Activated naive CD4-positive, alpha-beta T cell treated with anti-CD3 and anti-CD28 coated beads for 36 hours (primary cell): ENCODE measurements at regions of chr7 and their contacts with region 1.

Region 1: DNA sequence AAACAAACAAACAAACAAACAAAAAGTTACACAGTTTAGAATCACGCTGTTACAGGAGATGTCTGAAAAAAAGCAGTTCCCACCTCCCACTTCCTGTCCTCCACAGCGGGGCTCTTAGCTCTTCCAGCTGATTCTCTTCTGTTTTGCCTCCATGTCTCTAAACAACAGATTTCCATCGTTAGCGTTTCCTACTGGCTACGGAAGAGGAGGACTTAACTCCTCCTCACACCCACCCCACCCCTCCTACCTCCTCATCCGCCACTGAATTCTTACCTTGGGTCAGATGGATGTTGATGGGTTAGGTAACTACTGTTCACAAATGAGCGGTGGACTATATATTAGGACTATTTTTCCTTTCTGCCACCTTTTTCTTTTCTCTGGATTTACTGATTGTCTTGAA is 36.8 kb upstream of the NUB1 start:
- DNase-seq: no peak
- H3K4me3 Mint-ChIP-seq: peak overlapping the region; percentile 36
- H3K27ac Mint-ChIP-seq: no peak overlapping the region
- H3K4me1 Mint-ChIP-seq: peaks cover 5% of the 10 kb centered on the region
- H3K27me3 Mint-ChIP-seq: peaks cover 14% of the 10 kb centered on the region

Region 2: DNA sequence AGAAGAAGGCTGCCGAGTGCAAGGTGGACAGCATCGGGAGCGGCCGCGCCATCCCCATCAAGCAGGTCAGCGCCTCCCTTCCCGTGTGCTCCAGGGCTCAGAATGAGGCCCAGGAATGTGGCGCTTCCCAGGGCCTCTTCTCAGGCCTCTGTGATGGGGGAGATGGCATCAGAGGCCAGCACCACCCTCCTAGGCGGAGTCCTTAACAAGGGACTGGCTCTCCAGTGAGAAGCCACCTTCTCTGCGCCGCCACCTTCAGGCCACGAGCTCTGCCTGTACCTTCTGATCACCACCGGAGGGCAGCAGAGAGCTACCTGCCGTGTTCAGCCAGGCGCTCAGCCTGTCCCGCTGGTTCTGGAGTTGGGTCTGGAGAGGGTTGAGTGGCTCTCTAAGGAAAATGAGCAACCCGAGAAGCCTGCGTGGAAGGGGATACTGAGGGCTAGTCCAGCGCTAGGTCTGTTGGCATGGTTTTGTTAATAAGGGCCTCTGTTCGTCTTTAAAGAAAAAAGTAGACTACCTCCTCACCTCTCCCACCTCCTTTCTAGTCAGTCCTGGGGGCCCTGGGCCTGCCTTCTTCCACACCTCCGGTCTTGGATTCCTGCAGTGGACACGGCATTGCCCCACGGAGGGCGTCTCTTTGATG is 180.9 kb before region 1 on chr7:
- CTCF ChIA-PET with region 1: interaction called, 17 read pairs
- intact Hi-C with region 1: loop called (anchors 1 kb)
- DNase-seq: peak; percentile 89
- H3K4me3 Mint-ChIP-seq: no peak overlapping the region
- H3K27ac Mint-ChIP-seq: no peak overlapping the region
- H3K4me1 Mint-ChIP-seq: peaks cover 4% of the 10 kb centered on the region
- H3K27me3 Mint-ChIP-seq: no peaks in the 10 kb centered on the region

Region 3: GRCh38 chr7:151172273-151173141 is 132.3 kb before region 1 on chr7:
- CTCF ChIA-PET with region 1: interaction called, 3 read pairs
- intact Hi-C with region 1: loop called (anchors 1 kb)
- DNase-seq: peak; percentile 81
- H3K4me3 Mint-ChIP-seq: no peak overlapping the region
- H3K27ac Mint-ChIP-seq: no peak overlapping the region
- H3K4me1 Mint-ChIP-seq: peaks cover 10% of the 10 kb centered on the region
- H3K27me3 Mint-ChIP-seq: peaks cover 51% of the 10 kb centered on the region

Region 4: GRCh38 chr7:151210087-151210854 is 94.6 kb before region 1 on chr7 and contains the start of gene H2BK1:
- CTCF ChIA-PET with region 1: no interaction called
- intact Hi-C with region 1: no loop called
- DNase-seq: no peak
- H3K4me3 Mint-ChIP-seq: no peak within 1 kb of the TSS
- H3K27ac Mint-ChIP-seq: no peak within 1 kb of the TSS
- H3K4me1 Mint-ChIP-seq: peaks cover 17% of the 10 kb centered on the region
- H3K27me3 Mint-ChIP-seq: no peaks in the 10 kb centered on the region
- total RNA-seq, gene H2BK1: not detected

Region 5: DNA sequence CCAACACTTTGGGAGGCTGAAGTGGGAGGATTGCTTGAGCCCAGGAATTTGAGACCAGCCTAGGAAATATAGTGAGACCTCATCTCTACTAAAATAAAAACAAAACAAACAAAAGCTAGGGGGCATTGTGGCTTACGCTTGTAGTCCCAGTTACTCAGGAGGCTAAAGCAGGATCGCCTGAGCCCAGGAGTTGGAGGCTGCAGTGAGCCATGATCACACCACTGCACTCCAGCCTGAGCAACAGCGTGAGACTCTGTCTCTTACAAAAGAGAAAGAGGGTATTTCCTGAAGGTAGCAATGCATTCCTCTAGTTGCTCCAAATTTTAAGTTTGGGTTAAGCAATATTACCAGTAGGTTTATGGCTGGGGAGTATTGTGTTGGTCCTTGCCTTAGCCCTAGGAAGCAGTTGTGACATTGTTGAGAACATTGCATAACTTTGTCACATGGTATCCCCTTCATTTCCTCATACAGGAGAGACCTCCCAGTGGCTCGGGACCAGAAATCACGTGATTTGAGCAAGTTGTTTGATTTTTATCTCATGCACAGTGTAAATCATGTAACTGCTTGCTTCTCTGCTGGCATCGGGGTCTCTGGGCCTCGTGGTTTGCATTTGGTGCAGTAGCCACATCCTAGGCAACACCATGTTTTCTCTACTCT is 33.0 kb before region 1 on chr7:
- CTCF ChIA-PET with region 1: no interaction called
- intact Hi-C with region 1: loop called (anchors 1 kb)
- DNase-seq: no peak
- H3K4me3 Mint-ChIP-seq: no peak overlapping the region
- H3K27ac Mint-ChIP-seq: no peak overlapping the region
- H3K4me1 Mint-ChIP-seq: peaks cover 14% of the 10 kb centered on the region
- H3K27me3 Mint-ChIP-seq: no peaks in the 10 kb centered on the region